ENCODE measurements at regions of chr12 and their contacts with region 1.

Region 1: GRCh38 chr12:52372216-52373154 is 5.2 kb upstream of the KRT85 start:
- DNase-seq: peak; percentile 79
- ATAC-seq: peak; percentile 96
- H3K4me3 ChIP-seq: no peak overlapping the region
- H3K27ac ChIP-seq: no peak overlapping the region
- H3K4me1 ChIP-seq: peaks cover 0 to 2% of the 10 kb centered on the region in 2 experiments; a peak in 1 of 4 replicates
- H3K27me3 ChIP-seq: no peaks in the 10 kb centered on the region
- CTCF ChIP-seq: peak; percentile 82 to 97 (median 84)
- POLR2A ChIP-seq: no peak
- RAD21 ChIP-seq: peak; percentile 96

Region 2: GRCh38 chr12:52139552-52140062 is 232.9 kb before region 1 on chr12:
- CTCF ChIA-PET with region 1: interaction called, 6 read pairs
- POLR2A ChIA-PET with region 1: interaction called, 3 read pairs
- RAD21 ChIA-PET with region 1: no interaction called
- intact Hi-C with region 1: loop called (anchors 5 kb)
- DNase-seq: no peak
- ATAC-seq: peak; percentile 73
- H3K4me3 ChIP-seq: no peak overlapping the region
- H3K27ac ChIP-seq: no peak overlapping the region
- H3K4me1 ChIP-seq: peaks cover 19 to 43% of the 10 kb centered on the region in 2 experiments
- H3K27me3 ChIP-seq: no peaks in the 10 kb centered on the region
- CTCF ChIP-seq: peak in 2 of 3 experiments; percentile 96 to 98; a peak in 4 of 6 replicates
- POLR2A ChIP-seq: no peak
- RAD21 ChIP-seq: no peak

Region 3: DNA sequence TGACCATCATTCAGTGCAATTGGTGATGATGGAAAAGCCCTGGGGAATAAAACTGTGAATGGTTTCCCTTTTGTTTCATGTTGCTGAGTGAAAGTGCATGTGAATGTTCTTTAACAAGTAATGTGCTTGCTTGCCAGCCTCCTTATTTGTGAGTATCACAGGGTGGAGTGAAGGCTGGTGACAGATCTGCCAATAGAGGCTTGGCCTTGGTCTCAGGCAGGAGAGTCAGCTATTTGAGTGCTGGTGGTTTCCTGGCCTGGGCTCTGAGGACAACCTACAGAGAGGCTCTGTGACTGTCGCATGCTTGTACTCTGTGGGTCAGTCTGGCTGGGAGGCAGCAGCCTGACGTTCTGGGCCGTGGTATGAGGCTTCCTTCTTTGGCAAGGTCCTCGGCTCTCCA is 25.9 kb before region 1 on chr12:
- CTCF ChIA-PET with region 1: interaction called, 10 read pairs
- POLR2A ChIA-PET with region 1: no interaction called
- RAD21 ChIA-PET with region 1: no interaction called
- intact Hi-C with region 1: no loop called
- DNase-seq: no peak
- ATAC-seq: no peak
- H3K4me3 ChIP-seq: no peak overlapping the region
- H3K27ac ChIP-seq: no peak overlapping the region
- H3K4me1 ChIP-seq: peaks cover 14 to 29% of the 10 kb centered on the region in 2 experiments
- H3K27me3 ChIP-seq: no peaks in the 10 kb centered on the region
- CTCF ChIP-seq: no peak
- POLR2A ChIP-seq: no peak
- RAD21 ChIP-seq: no peak

Region 4: DNA sequence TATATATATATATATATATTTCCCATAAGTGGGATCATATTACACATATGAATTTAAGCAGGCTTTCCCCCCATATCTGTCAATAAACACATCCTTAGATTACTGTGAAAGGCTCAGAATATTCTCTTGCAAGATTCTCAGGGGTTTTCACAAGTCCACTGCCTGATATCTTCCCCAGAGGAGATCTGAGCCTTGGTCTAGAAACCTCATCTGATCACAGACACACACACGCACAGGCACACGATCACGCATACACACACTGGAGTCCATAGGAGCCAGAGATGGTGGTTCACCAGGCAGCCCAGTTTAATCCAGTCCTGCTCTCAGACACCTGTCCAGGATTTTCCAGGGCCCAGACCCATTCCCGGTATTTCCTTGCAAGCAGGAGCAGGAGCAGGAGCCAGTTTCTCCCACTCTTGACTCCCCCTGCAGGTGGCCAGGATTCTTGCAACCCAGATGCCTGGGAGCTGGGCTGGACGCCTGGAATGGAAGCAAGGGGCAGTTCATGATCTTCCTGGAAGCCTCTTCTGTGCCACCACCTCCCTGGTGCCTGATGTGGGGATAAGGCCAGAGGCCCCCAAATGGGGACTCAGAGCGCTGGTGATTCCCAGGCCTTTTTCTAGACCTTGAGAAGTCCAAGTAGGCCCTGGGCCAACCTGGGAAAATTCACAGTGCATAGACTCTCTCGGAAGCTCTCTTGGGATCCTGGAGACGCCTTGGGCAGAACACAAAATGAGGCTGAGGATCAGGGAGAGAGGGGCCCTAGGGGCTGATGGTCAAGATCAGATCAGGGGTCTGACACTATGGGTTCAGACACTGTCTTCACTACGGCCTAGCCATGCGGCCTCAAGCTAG is 492.8 kb after region 1 on chr12:
- CTCF ChIA-PET with region 1: interaction called, 33 read pairs
- POLR2A ChIA-PET with region 1: no interaction called
- RAD21 ChIA-PET with region 1: interaction called, 3 to 6 read pairs
- intact Hi-C with region 1: no loop called
- DNase-seq: peak; percentile 79
- ATAC-seq: peak; percentile 90
- H3K4me3 ChIP-seq: no peak overlapping the region
- H3K27ac ChIP-seq: peak overlapping the region; percentile 15; the same call in 1 of the 2 replicates
- H3K4me1 ChIP-seq: peaks cover 5 to 18% of the 10 kb centered on the region in 2 experiments; a peak in 3 of 4 replicates
- H3K27me3 ChIP-seq: no peaks in the 10 kb centered on the region
- CTCF ChIP-seq: peak in 2 of 3 experiments; percentile 88 to 96; a peak in 4 of 6 replicates
- POLR2A ChIP-seq: no peak
- RAD21 ChIP-seq: no peak

Region 5: DNA sequence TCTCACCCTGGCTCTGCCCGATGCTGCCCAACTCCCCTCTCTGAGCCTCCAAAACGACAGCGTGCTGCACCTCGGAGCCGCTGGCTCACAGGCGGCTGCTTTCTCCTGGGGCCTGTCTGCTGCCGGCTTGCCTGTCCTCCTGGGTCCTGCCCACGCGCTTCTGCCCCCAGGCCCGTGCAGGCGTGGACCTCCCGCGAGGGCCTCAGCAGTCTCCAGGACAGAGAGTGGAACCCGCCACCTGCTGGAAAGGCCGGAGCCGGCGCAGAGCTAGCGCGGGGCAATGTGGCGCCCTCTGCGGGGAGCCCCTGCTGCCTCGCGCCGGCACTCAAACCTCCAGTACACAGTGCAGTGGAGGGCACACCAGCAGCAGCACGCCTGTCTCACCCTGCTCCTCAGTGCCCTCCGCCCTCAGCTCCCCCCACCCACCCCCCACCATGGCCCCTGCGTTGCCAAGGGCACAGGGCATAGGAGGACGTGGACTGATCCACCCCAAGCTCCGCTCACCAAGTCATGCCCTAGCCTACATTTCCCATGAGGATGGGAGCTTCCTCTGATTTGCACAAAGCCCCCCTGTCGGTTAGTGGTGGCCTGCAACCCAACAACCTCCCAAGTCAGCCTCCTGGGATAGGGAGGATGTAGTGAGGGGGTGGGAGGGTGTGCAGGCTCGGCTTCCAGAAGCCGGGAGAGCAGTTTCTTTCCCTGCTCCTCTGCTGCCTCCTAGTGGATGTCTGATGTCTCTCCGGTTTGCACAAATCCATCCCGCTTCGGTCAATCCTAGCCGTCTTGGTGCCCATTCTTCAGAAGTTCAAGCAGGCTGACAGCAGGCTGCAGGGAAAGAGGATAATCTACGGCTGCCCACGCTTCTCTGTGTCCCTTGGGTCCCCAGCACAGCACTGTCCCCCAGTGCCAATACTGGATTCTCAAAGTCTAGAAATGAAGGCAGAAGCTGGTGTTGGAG is 507.2 kb after region 1 on chr12:
- CTCF ChIA-PET with region 1: interaction called, 57 read pairs
- POLR2A ChIA-PET with region 1: interaction called, 3 read pairs
- RAD21 ChIA-PET with region 1: interaction called, 7 to 14 read pairs
- intact Hi-C with region 1: loop called (anchors 1 kb)
- DNase-seq: peak; percentile 86
- ATAC-seq: peak; percentile 87
- H3K4me3 ChIP-seq: peak overlapping the region; percentile 30 to 49
- H3K27ac ChIP-seq: peak overlapping the region; percentile 44
- H3K4me1 ChIP-seq: peaks cover 33 to 61% of the 10 kb centered on the region in 2 experiments
- H3K27me3 ChIP-seq: no peaks in the 10 kb centered on the region
- CTCF ChIP-seq: peak in 2 of 3 experiments; percentile 76 to 95; a peak in 4 of 6 replicates
- POLR2A ChIP-seq: no peak
- RAD21 ChIP-seq: no peak

Measured in HCT116 (cell line).